ENCODE measurements at regions of chr13 and their contacts with region 1.

Region 1: DNA sequence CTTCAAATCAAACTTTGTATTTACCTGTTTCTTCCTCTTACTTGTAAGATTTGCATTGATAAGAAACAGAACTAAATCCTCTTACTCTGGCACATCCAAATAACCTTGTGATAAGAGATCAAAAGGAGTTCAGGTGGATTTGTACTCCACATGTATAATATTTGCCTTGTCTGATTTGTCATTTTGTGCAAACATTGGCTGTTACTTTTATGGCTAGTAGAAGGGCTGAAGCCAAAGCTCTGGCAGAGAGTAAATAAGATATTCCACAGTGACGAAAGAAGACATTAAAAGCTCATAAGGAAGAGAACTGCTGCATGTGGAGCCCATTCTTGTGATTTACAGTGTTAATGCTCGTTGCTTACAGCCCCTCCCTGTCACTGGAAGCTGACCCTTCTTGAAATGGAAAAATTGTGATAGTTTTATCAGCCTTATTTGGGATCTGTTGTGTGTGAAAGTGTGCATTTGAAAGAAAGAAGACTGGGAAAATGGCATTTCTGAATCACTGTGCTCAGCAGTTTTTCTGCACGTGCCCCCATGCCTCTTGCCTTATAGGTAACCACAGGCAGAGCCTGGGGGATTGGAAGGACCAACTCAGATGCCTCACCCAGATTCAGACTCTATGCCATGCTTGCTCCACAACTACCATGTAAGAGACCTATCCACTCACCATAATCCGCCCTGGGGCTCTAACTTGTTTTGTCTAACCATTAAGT is 68.2 kb downstream of the OXGR1 start:
- DNase-seq: peak; percentile 40 to 74
- H3K4me3 ChIP-seq: no peak overlapping the region
- H3K4me3 Mint-ChIP-seq: no peak overlapping the region
- H3K27ac Mint-ChIP-seq: no peak overlapping the region
- H3K4me1 ChIP-seq: peaks cover 20% of the 10 kb centered on the region
- H3K4me1 Mint-ChIP-seq: peaks cover 12% of the 10 kb centered on the region
- H3K27me3 ChIP-seq: no peaks in the 10 kb centered on the region
- H3K27me3 Mint-ChIP-seq: peaks cover 9% of the 10 kb centered on the region
- CTCF ChIP-seq: no peak

Region 2: GRCh38 chr13:96621634-96622183 is 304.4 kb before region 1 on chr13:
- CTCF ChIA-PET with region 1: no interaction called
- POLR2A ChIA-PET with region 1: no interaction called
- intact Hi-C with region 1: loop called (anchors 1 kb)
- DNase-seq: peak in 1 of 2 experiments; percentile 62
- H3K4me3 ChIP-seq: no peak overlapping the region
- H3K4me3 Mint-ChIP-seq: no peak overlapping the region
- H3K27ac Mint-ChIP-seq: peak overlapping the region; percentile 53
- H3K4me1 ChIP-seq: peaks cover 9% of the 10 kb centered on the region; the same call in 1 of the 2 replicates
- H3K4me1 Mint-ChIP-seq: peaks cover 17% of the 10 kb centered on the region
- H3K27me3 ChIP-seq: no peaks in the 10 kb centered on the region
- H3K27me3 Mint-ChIP-seq: no peaks in the 10 kb centered on the region
- CTCF ChIP-seq: no peak

Region 3: GRCh38 chr13:96848286-96848685 is 77.8 kb before region 1 on chr13:
- CTCF ChIA-PET with region 1: no interaction called
- POLR2A ChIA-PET with region 1: no interaction called
- intact Hi-C with region 1: loop called (anchors 1 kb)
- DNase-seq: peak in 1 of 2 experiments; percentile 12
- H3K4me3 ChIP-seq: no peak overlapping the region
- H3K4me3 Mint-ChIP-seq: no peak overlapping the region
- H3K27ac Mint-ChIP-seq: no peak overlapping the region
- H3K4me1 ChIP-seq: peaks cover 9% of the 10 kb centered on the region
- H3K4me1 Mint-ChIP-seq: no peaks in the 10 kb centered on the region
- H3K27me3 ChIP-seq: no peaks in the 10 kb centered on the region
- H3K27me3 Mint-ChIP-seq: peaks cover 17% of the 10 kb centered on the region
- CTCF ChIP-seq: no peak

Region 4: GRCh38 chr13:96946709-96947311 is 20.7 kb after region 1 on chr13:
- CTCF ChIA-PET with region 1: no interaction called
- POLR2A ChIA-PET with region 1: no interaction called
- intact Hi-C with region 1: loop called (anchors 1 kb)
- DNase-seq: peak; percentile 50 to 66
- H3K4me3 ChIP-seq: no peak overlapping the region
- H3K4me3 Mint-ChIP-seq: no peak overlapping the region
- H3K27ac Mint-ChIP-seq: no peak overlapping the region
- H3K4me1 ChIP-seq: 0 out of 2 replicates have a peak, but pooled peaks cover 5% of the 10 kb centered on the region
- H3K4me1 Mint-ChIP-seq: peaks cover 13% of the 10 kb centered on the region
- H3K27me3 ChIP-seq: no peaks in the 10 kb centered on the region
- H3K27me3 Mint-ChIP-seq: peaks cover 5% of the 10 kb centered on the region
- CTCF ChIP-seq: no peak

Measured in Caco-2 (cell line).